SK-N-SH (cell line): ENCODE measurements at regions of chr5 and their contacts with region 1.

Region 1: DNA sequence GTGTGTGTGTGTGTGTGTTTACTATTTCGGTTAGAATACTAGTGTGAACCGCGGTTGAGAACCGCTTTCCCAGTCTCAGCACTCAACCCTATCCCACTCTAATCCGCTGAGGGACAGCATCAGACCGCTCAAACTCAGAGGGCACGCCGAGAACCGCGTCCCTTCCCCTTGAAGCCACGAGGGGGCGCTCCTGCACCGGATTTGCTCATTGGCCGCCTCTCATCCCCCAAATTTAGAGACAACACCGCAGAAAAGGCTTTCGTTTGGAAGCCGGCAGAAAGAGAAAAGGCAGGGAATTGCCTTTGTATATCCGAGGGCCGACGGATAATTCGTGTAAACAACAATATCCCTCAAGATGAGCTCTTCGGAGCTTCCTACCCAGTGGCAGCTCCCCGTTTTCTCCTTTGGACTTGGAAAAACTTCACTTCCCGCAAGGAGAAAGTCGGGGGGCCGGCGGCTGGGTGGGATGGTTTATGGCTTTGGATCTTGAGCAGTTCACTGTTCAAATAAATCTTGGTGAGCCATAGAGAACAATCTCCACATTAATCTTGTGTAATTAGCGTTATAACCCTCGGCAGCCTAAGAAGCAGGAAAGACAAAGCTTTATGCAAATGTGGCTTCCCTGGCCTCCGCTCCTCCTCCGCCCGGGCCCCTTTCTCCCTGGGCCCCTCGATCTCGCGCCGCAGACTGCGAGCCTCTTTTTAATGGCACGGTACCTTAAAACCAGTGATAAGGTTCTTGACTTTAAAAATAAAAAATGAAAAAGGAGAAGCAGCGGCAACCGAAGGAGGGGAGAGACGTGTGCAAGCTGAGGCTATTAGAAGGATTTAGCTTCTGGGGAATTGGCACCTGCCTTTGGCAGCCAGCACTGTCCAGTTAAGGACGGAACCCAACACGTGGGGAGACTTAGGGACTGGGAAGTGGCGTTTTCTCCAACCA is 296.8 kb downstream of the PARP8 start:
- DNase-seq: peak; percentile 87
- H3K4me3 ChIP-seq: peak overlapping the region; percentile 57 to 81
- H3K27ac ChIP-seq: peak overlapping the region in 1 of 2 experiments; percentile 84; a peak in 2 of 4 replicates
- H3K4me1 ChIP-seq: peaks cover 0 to 30% of the 10 kb centered on the region in 2 experiments; a peak in 2 of 4 replicates
- H3K27me3 ChIP-seq: peaks cover 38% of the 10 kb centered on the region
- CTCF ChIP-seq: peak; percentile 99
- EP300 ChIP-seq: no peak
- RAD21 ChIP-seq: peak; percentile 100

Region 2: DNA sequence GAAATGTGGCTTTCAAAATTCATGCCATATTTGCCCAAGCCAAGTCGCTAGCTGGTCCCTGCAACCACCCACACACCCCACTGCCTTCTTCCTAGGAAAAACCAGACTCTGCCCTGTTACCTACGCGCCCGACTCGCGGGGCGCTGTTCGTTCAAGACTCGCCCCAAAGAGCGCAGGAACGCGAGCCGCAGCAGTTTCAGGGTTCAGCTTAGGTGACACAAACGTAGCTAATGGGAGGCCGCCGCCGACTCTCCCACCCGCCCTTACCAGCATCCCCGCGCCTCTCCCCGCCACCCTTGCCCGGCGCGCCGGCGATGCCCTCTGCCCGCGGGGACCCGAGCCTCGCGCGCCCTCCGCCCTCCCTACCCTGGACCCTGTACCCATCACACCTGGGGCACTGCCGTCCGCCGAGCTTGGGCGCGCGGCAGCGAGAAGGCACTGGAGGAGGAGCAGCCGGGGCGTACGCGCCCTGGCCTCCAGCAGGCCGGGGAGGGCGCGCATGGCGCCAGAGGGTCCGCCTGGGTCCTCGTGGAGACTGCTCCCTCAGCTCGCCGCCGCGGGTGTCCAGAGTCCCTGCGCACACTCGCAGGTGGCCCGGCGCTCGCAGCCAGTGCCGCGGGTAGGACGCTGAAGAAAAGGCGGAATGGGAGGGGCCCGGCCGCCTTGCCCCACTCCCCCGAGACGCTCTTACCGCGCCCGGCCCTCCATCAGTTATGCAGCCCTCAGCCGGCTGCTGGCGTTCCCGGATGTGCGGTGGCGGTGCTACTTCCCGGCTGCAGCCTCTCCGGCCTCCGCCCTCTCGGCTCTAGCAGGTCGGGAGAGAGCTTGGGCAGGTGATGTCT is 522.3 kb before region 1 on chr5 and contains the start of gene EMB:
- CTCF ChIA-PET with region 1: no interaction called
- POLR2A ChIA-PET with region 1: no interaction called
- DNase-seq: peak; percentile 77
- H3K4me3 ChIP-seq: peak within 1 kb of the TSS; percentile 69 to 73
- H3K27ac ChIP-seq: peak within 1 kb of the TSS; percentile 47 to 68
- H3K4me1 ChIP-seq: peaks cover 0 to 2% of the 10 kb centered on the region in 2 experiments; a peak in 2 of 4 replicates
- H3K27me3 ChIP-seq: no peaks in the 10 kb centered on the region
- CTCF ChIP-seq: peak; percentile 41
- EP300 ChIP-seq: no peak
- RAD21 ChIP-seq: 0 out of 2 replicates have a peak, but pooled peaks have one; percentile 21
- polyA plus RNA-seq, gene EMB: 15.5 and 22.6 TPM in 2 replicates

Region 3: DNA sequence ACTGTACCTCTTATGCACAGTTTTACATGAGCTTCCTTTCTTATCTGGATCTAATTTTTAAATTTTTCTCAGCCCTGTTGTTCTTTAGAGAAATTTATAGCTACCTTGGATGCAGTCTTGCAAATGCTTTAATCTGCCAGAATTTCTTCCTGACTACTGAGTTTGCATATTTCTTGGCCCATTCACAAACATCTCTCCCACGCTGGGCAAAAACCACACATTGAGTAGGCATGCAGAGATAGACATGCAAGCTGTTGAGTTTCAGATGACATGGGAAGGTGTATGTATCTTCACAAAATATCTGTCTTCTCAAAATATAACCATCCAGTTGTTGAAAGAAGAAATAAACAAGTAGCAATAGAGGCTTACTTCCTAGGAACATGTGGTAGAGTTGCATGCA is 195.6 kb before region 1 on chr5:
- CTCF ChIA-PET with region 1: no interaction called
- POLR2A ChIA-PET with region 1: no interaction called
- DNase-seq: no peak
- H3K4me3 ChIP-seq: no peak overlapping the region
- H3K27ac ChIP-seq: peak overlapping the region in 1 of 2 experiments; percentile 18; a peak in 1 of 4 replicates
- H3K4me1 ChIP-seq: peaks cover 0 to 9% of the 10 kb centered on the region in 2 experiments; a peak in 2 of 4 replicates
- H3K27me3 ChIP-seq: no peaks in the 10 kb centered on the region
- CTCF ChIP-seq: no peak
- EP300 ChIP-seq: no peak
- RAD21 ChIP-seq: no peak

Region 4: DNA sequence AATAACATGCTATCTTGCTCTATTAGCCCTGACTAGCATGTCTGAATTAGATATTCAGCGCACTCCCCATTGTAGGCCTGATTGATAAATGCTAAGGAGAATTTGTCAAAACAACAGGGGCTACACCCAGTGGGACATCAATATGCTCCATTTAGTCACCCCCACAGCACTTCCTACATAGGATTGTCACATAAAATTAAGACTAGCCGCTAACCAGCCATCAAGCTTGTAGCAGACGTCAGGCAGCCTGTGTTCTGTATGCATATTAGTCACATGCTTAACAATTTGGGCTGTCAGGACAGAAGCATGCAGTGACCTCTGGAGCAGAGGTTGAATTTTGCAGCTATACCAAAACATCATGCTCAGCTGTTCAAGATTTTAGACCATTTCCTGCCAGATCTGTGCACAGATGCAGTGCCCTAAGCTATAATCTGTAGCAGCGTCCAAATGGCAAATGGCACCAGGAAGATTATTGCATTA is 222.7 kb after region 1 on chr5:
- CTCF ChIA-PET with region 1: interaction called, 54 read pairs
- POLR2A ChIA-PET with region 1: interaction called, 46 read pairs
- DNase-seq: peak; percentile 41
- H3K4me3 ChIP-seq: no peak overlapping the region
- H3K27ac ChIP-seq: peak overlapping the region in 1 of 2 experiments; percentile 98; a peak in 2 of 4 replicates
- H3K4me1 ChIP-seq: peaks cover 0 to 20% of the 10 kb centered on the region in 2 experiments; a peak in 2 of 4 replicates
- H3K27me3 ChIP-seq: no peaks in the 10 kb centered on the region
- CTCF ChIP-seq: no peak
- EP300 ChIP-seq: peak in 1 of 2 experiments; percentile 98; a peak in 2 of 4 replicates
- RAD21 ChIP-seq: peak; percentile 64

Region 5: GRCh38 chr5:51382763-51383490 is 419.7 kb after region 1 on chr5 and contains the start of gene ISL1:
- CTCF ChIA-PET with region 1: interaction called, 303 read pairs
- POLR2A ChIA-PET with region 1: interaction called, 437 read pairs
- DNase-seq: peak; percentile 88
- H3K4me3 ChIP-seq: peak within 1 kb of the TSS; percentile 83 to 86
- H3K27ac ChIP-seq: peak within 1 kb of the TSS; percentile 88 to 100
- H3K4me1 ChIP-seq: peaks cover 3 to 10% of the 10 kb centered on the region in 2 experiments; a peak in 3 of 4 replicates
- H3K27me3 ChIP-seq: no peaks in the 10 kb centered on the region
- CTCF ChIP-seq: peak; percentile 14; the same call in 1 of the 2 replicates
- EP300 ChIP-seq: no peak; a peak in 1 of 4 replicates
- RAD21 ChIP-seq: peak; percentile 14; the same call in 1 of the 2 replicates
- polyA plus RNA-seq, gene ISL1: 15.2 and 15.5 TPM in 2 replicates

Region 6: DNA sequence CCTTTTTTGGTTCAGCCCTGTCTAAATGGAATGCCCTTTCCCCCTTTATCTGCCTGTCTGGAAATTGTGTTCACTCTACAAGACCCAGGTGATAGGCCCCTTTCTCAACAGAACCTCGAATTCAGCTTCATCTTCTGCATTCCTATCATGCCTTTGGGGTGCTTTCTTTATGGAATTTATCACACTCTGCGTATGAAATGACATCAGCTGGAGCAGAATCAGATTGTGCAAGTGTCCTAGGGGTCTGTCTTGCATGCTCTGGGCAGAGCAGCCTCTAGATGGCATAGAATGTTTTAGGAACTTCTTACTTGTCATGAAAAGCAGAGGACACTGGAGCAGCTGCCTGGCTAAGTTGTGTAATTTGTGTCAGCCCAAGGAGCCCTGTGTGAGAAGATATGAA is 505.0 kb after region 1 on chr5:
- CTCF ChIA-PET with region 1: interaction called, 12 read pairs
- POLR2A ChIA-PET with region 1: interaction called, 9 read pairs
- DNase-seq: no peak
- H3K4me3 ChIP-seq: peak overlapping the region in 1 of 2 experiments; percentile 41; a peak in 1 of 4 replicates
- H3K27ac ChIP-seq: peak overlapping the region in 1 of 2 experiments; percentile 99; a peak in 2 of 4 replicates
- H3K4me1 ChIP-seq: peaks cover 0 to 48% of the 10 kb centered on the region in 2 experiments; a peak in 2 of 4 replicates
- H3K27me3 ChIP-seq: no peaks in the 10 kb centered on the region
- CTCF ChIP-seq: peak; percentile 49
- EP300 ChIP-seq: peak in 1 of 2 experiments; percentile 13; a peak in 1 of 4 replicates
- RAD21 ChIP-seq: peak; percentile 79

Region 7: GRCh38 chr5:51997949-51998348 is 1034.7 kb after region 1 on chr5:
- CTCF ChIA-PET with region 1: interaction called, 9 read pairs
- POLR2A ChIA-PET with region 1: interaction called, 12 read pairs
- DNase-seq: peak; percentile 79
- H3K4me3 ChIP-seq: no peak overlapping the region
- H3K27ac ChIP-seq: peak overlapping the region in 1 of 2 experiments; percentile 100; a peak in 3 of 4 replicates
- H3K4me1 ChIP-seq: peaks cover 0 to 41% of the 10 kb centered on the region in 2 experiments; a peak in 2 of 4 replicates
- H3K27me3 ChIP-seq: no peaks in the 10 kb centered on the region
- CTCF ChIP-seq: no peak
- EP300 ChIP-seq: peak in 1 of 2 experiments; percentile 99; a peak in 2 of 4 replicates
- RAD21 ChIP-seq: peak; percentile 39; the same call in 1 of the 2 replicates

Region 8: GRCh38 chr5:52560366-52560765 is 1597.2 kb after region 1 on chr5:
- CTCF ChIA-PET with region 1: interaction called, 17 read pairs
- POLR2A ChIA-PET with region 1: interaction called, 6 read pairs
- DNase-seq: peak; percentile 11
- H3K4me3 ChIP-seq: no peak overlapping the region
- H3K27ac ChIP-seq: peak overlapping the region in 1 of 2 experiments; percentile 100; a peak in 2 of 4 replicates
- H3K4me1 ChIP-seq: peaks cover 0 to 31% of the 10 kb centered on the region in 2 experiments; a peak in 3 of 4 replicates
- H3K27me3 ChIP-seq: no peaks in the 10 kb centered on the region
- CTCF ChIP-seq: peak; percentile 36
- EP300 ChIP-seq: no peak
- RAD21 ChIP-seq: peak; percentile 82